ENCODE measurements at regions of chr10 and their contacts with region 1.

Region 1: GRCh38 chr10:100518761-100519241 is 860 bp downstream of the SEC31B start:
- DNase-seq: peak; percentile 25 to 75 (median 67)
- ATAC-seq: peak; percentile 86
- H3K4me3 ChIP-seq: no peak overlapping the region
- H3K4me3 Mint-ChIP-seq: no peak overlapping the region
- H3K27ac ChIP-seq: no peak overlapping the region
- H3K27ac Mint-ChIP-seq: no peak overlapping the region
- H3K4me1 ChIP-seq: peaks cover 11% of the 10 kb centered on the region
- H3K4me1 Mint-ChIP-seq: peaks cover 21% of the 10 kb centered on the region
- H3K27me3 ChIP-seq: no peaks in the 10 kb centered on the region
- H3K27me3 Mint-ChIP-seq: no peaks in the 10 kb centered on the region
- CTCF ChIP-seq: peak; percentile 90

Region 2: DNA sequence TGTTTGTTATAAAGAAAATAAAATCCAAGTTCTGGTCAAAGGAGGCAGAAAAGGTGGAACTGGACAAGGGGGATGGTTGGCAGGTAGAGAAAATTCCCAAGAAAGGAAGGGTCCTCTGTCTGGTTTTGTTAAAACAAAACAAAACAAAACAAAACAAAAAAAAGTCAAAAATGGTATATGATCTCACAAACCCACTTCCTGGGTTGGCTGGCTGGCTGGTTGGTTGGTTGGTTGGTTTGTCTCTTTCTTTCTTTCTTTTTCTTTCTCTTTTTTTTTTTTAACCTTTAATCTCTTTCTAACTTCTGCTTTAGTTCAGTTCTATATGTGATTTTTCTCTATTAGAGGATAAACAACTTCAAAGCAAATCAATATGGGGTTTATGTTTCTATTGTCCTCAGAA is 396.0 kb before region 1 on chr10:
- CTCF ChIA-PET with region 1: no interaction called
- POLR2A ChIA-PET with region 1: no interaction called
- intact Hi-C with region 1: no loop called
- DNase-seq: no peak
- ATAC-seq: no peak
- H3K4me3 ChIP-seq: no peak overlapping the region
- H3K4me3 Mint-ChIP-seq: no peak overlapping the region
- H3K27ac ChIP-seq: no peak overlapping the region
- H3K27ac Mint-ChIP-seq: no peak overlapping the region
- H3K4me1 ChIP-seq: no peaks in the 10 kb centered on the region
- H3K4me1 Mint-ChIP-seq: peaks cover 5% of the 10 kb centered on the region
- H3K27me3 ChIP-seq: no peaks in the 10 kb centered on the region
- H3K27me3 Mint-ChIP-seq: peaks cover 2% of the 10 kb centered on the region
- CTCF ChIP-seq: no peak

Region 3: GRCh38 chr10:100338434-100339036 is 180.3 kb before region 1 on chr10:
- CTCF ChIA-PET with region 1: interaction called, 113 read pairs
- POLR2A ChIA-PET with region 1: no interaction called
- intact Hi-C with region 1: loop called (anchors 1 to 2 kb)
- DNase-seq: peak; percentile 67 to 86 (median 81)
- ATAC-seq: peak; percentile 93
- H3K4me3 ChIP-seq: no peak overlapping the region
- H3K4me3 Mint-ChIP-seq: no peak overlapping the region
- H3K27ac ChIP-seq: no peak overlapping the region
- H3K27ac Mint-ChIP-seq: no peak overlapping the region
- H3K4me1 ChIP-seq: no peaks in the 10 kb centered on the region
- H3K4me1 Mint-ChIP-seq: no peaks in the 10 kb centered on the region
- H3K27me3 ChIP-seq: no peaks in the 10 kb centered on the region
- H3K27me3 Mint-ChIP-seq: peaks cover 5% of the 10 kb centered on the region
- CTCF ChIP-seq: peak; percentile 77

Region 4: GRCh38 chr10:100438674-100439315 is 80.0 kb before region 1 on chr10:
- CTCF ChIA-PET with region 1: interaction called, 298 read pairs
- POLR2A ChIA-PET with region 1: interaction called, 3 read pairs
- intact Hi-C with region 1: loop called (anchors 1 kb)
- DNase-seq: no peak
- ATAC-seq: no peak
- H3K4me3 ChIP-seq: no peak overlapping the region
- H3K4me3 Mint-ChIP-seq: no peak overlapping the region
- H3K27ac ChIP-seq: no peak overlapping the region
- H3K27ac Mint-ChIP-seq: no peak overlapping the region
- H3K4me1 ChIP-seq: no peaks in the 10 kb centered on the region
- H3K4me1 Mint-ChIP-seq: peaks cover 2% of the 10 kb centered on the region
- H3K27me3 ChIP-seq: no peaks in the 10 kb centered on the region
- H3K27me3 Mint-ChIP-seq: no peaks in the 10 kb centered on the region
- CTCF ChIP-seq: no peak

Region 5: GRCh38 chr10:100489396-100489795 is 29.4 kb before region 1 on chr10:
- CTCF ChIA-PET with region 1: interaction called, 238 read pairs
- POLR2A ChIA-PET with region 1: no interaction called
- intact Hi-C with region 1: no loop called
- DNase-seq: no peak
- ATAC-seq: no peak
- H3K4me3 ChIP-seq: no peak overlapping the region
- H3K4me3 Mint-ChIP-seq: no peak overlapping the region
- H3K27ac ChIP-seq: no peak overlapping the region
- H3K27ac Mint-ChIP-seq: no peak overlapping the region
- H3K4me1 ChIP-seq: no peaks in the 10 kb centered on the region
- H3K4me1 Mint-ChIP-seq: no peaks in the 10 kb centered on the region
- H3K27me3 ChIP-seq: no peaks in the 10 kb centered on the region
- H3K27me3 Mint-ChIP-seq: no peaks in the 10 kb centered on the region
- CTCF ChIP-seq: no peak

Region 6: DNA sequence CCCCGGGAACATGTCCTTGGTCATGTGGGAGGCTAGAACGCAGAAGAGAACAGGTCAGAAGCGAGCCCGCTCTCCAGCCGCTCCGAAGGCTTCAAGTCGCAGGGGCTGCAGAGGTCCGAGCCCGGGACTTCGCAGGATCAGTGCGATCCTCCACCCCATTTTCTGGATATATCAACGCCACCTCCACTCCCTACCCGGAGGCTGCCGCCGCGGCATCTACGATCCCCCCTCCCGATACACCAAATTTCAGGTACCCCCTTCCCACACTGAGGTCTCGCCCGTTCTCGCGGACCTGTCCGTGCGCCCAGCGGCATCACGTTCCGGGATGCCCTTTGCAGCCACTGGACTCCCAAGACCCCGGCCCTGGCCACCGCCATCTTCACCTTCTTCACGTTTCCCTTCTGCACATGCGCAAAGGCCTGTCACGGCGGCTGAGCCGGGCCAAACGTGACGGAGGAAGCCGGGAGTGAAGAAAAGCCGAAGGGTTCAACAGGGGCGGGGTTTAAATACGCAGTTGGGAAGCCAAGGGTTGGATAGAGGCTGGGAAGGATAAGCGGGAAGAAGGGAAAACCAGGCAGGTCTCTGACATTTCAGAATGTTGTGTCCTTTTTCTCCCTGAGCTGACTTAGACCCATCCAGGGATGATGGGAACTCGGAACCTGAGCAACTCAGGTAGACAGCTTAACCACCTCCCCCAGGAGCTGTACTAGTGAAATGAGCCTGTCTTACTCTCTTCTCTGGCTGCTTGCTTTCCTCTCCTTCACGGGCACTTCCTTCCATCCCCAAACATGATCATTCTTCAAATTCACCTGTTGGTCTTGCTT is 10.9 kb after region 1 on chr10 and contains the start of gene NDUFB8:
- CTCF ChIA-PET with region 1: interaction called, 23 read pairs
- POLR2A ChIA-PET with region 1: interaction called, 10 read pairs
- intact Hi-C with region 1: no loop called
- DNase-seq: peak; percentile 74 to 92 (median 87)
- ATAC-seq: peak; percentile 84
- H3K4me3 ChIP-seq: peak within 1 kb of the TSS; percentile 81 to 99
- H3K4me3 Mint-ChIP-seq: peak within 1 kb of the TSS; percentile 99
- H3K27ac ChIP-seq: peak within 1 kb of the TSS; percentile 77 to 83
- H3K27ac Mint-ChIP-seq: peak within 1 kb of the TSS; percentile 93
- H3K4me1 ChIP-seq: peaks cover 35% of the 10 kb centered on the region
- H3K4me1 Mint-ChIP-seq: peaks cover 38% of the 10 kb centered on the region
- H3K27me3 ChIP-seq: no peaks in the 10 kb centered on the region
- H3K27me3 Mint-ChIP-seq: no peaks in the 10 kb centered on the region
- CTCF ChIP-seq: no peak
- total RNA-seq, gene NDUFB8: 156 to 163 TPM

Measured in CD8-positive, alpha-beta T cell (primary cell).